Caco-2 (cell line): ENCODE measurements at regions of chr22 and their contacts with region 1.

Region 1: DNA sequence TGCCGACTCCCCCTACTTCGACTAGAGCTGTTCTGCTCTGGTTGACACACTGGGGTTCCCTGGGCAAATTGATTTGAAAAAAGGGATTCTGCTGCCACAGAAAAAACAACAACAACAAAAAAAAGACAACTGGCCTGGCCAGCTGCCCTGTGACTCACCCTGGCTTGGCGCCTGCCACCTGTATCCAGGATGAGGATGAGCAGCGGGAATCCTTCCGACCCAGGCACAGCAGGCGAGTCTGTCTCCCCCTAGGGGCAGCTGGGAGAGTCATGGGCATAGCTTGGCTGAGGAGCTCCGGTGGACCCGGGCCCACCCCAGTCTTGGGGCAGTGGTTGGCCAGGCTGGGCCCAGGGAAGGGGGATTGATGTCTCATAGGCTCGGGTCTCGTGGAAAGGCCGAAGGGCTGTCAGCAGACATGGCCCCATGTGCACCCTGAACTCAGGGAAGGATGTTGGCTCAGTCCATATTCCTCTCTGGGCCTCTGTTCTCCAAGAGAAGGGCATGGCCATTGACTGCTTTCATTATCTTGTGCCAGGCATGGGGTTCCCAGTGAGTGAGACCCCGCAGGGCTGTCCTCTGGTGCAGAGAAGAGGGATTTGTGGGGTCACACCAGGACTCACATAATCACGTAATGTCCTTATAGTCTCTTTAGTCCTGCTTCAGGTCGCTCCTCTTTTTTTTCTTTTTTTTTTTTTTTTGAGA is 10.4 kb upstream of the SUN2 start:
- DNase-seq: peak; percentile 70 to 76
- H3K4me3 ChIP-seq: no peak overlapping the region
- H3K4me3 Mint-ChIP-seq: no peak overlapping the region
- H3K27ac Mint-ChIP-seq: no peak overlapping the region
- H3K4me1 ChIP-seq: no peaks in the 10 kb centered on the region
- H3K4me1 Mint-ChIP-seq: no peaks in the 10 kb centered on the region
- H3K27me3 ChIP-seq: no peaks in the 10 kb centered on the region
- H3K27me3 Mint-ChIP-seq: no peaks in the 10 kb centered on the region
- CTCF ChIP-seq: peak; percentile 78 to 86

Region 2: GRCh38 chr22:38481162-38481870 is 284.9 kb before region 1 on chr22:
- CTCF ChIA-PET with region 1: no interaction called
- POLR2A ChIA-PET with region 1: no interaction called
- intact Hi-C with region 1: no loop called
- DNase-seq: no peak
- H3K4me3 ChIP-seq: no peak overlapping the region
- H3K4me3 Mint-ChIP-seq: no peak overlapping the region
- H3K27ac Mint-ChIP-seq: peak overlapping the region; percentile 15
- H3K4me1 ChIP-seq: peaks cover 11% of the 10 kb centered on the region
- H3K4me1 Mint-ChIP-seq: peaks cover 8% of the 10 kb centered on the region
- H3K27me3 ChIP-seq: no peaks in the 10 kb centered on the region
- H3K27me3 Mint-ChIP-seq: no peaks in the 10 kb centered on the region
- CTCF ChIP-seq: no peak

Region 3: GRCh38 chr22:38724926-38725571 is 41.2 kb before region 1 on chr22:
- CTCF ChIA-PET with region 1: interaction called, 10 read pairs
- POLR2A ChIA-PET with region 1: no interaction called
- intact Hi-C with region 1: no loop called
- DNase-seq: peak in 1 of 2 experiments; percentile 36
- H3K4me3 ChIP-seq: no peak overlapping the region
- H3K4me3 Mint-ChIP-seq: no peak overlapping the region
- H3K27ac Mint-ChIP-seq: no peak overlapping the region
- H3K4me1 ChIP-seq: no peaks in the 10 kb centered on the region
- H3K4me1 Mint-ChIP-seq: no peaks in the 10 kb centered on the region
- H3K27me3 ChIP-seq: no peaks in the 10 kb centered on the region
- H3K27me3 Mint-ChIP-seq: no peaks in the 10 kb centered on the region
- CTCF ChIP-seq: peak; percentile 44 to 49

Region 4: DNA sequence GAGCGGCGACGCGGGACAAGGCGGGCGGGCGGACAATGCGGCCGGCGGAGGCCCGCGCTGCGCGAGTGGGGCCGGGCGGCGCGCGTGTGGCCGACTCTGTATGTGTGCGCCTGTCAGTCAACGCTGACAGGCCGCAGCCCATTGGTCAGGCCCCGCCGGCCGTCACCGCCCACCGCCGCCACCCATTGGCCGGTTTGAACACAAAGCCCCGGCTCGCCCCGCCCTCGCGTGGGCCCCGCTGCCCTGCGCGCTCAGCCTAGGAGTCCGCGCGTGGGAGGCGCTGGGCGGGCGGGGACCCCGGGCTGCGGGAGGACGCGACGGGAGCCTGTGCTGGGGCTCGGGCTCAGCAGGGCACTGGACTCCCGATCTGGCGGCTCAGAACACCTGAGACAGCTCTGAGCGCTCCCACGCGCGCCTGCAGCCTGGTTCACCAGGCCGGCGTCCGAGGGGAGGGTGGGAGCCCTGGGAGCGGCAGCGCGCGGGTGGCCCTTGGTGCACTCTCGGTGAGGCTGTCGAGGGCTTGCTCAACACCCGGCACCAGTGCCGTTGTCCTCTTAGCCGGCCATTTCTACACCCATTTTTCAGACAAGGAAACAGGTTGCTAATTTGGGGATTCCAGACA is 10.2 kb before region 1 on chr22 and contains the start of gene SUN2:
- CTCF ChIA-PET with region 1: interaction called, 11 read pairs
- POLR2A ChIA-PET with region 1: no interaction called
- intact Hi-C with region 1: no loop called
- DNase-seq: peak; percentile 85 to 91
- H3K4me3 ChIP-seq: peak within 1 kb of the TSS; percentile 94
- H3K4me3 Mint-ChIP-seq: peak within 1 kb of the TSS; percentile 77
- H3K27ac Mint-ChIP-seq: peak within 1 kb of the TSS; percentile 80
- H3K4me1 ChIP-seq: peaks cover 21% of the 10 kb centered on the region
- H3K4me1 Mint-ChIP-seq: peaks cover 13% of the 10 kb centered on the region
- H3K27me3 ChIP-seq: no peaks in the 10 kb centered on the region
- H3K27me3 Mint-ChIP-seq: no peaks in the 10 kb centered on the region
- CTCF ChIP-seq: no peak
- total RNA-seq, gene SUN2: 61.9 and 67.8 TPM in 2 replicates

Region 5: GRCh38 chr22:38802671-38803121 is 36.5 kb after region 1 on chr22:
- CTCF ChIA-PET with region 1: no interaction called
- POLR2A ChIA-PET with region 1: no interaction called
- intact Hi-C with region 1: no loop called
- DNase-seq: peak in 1 of 2 experiments; percentile 8
- H3K4me3 ChIP-seq: no peak overlapping the region
- H3K4me3 Mint-ChIP-seq: peak overlapping the region; percentile 0
- H3K27ac Mint-ChIP-seq: no peak overlapping the region
- H3K4me1 ChIP-seq: no peaks in the 10 kb centered on the region
- H3K4me1 Mint-ChIP-seq: no peaks in the 10 kb centered on the region
- H3K27me3 ChIP-seq: no peaks in the 10 kb centered on the region
- H3K27me3 Mint-ChIP-seq: peaks cover 16% of the 10 kb centered on the region
- CTCF ChIP-seq: no peak

Region 6: DNA sequence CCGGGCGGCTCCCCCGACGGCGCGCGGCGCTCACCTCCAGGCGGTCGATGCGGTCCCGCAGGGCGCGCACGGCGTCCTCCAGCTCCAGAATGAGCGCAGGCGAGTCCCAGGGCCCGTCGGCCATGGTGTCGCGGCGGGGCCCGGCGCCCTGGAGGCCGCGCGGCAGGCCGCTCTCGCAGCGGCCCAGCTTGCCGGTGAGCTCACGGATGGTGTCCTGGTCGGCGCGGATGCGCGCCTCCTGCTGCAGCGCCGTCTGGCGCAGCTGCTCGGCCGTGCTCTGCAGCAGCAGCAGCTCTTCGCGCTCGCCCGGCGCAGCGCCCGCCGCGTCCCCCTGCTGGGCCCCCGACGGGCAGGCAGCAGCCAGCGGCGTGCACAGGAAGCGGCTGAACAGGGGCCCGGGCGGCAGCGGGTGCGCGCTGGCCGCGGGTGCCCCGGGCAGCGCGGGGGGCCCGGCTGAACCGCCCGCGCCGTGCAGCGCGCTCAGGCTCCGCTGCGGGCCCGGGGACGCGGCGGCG is 77.0 kb after region 1 on chr22:
- CTCF ChIA-PET with region 1: interaction called, 29 read pairs
- POLR2A ChIA-PET with region 1: no interaction called
- intact Hi-C with region 1: loop called (anchors 5 kb)
- DNase-seq: peak; percentile 58 to 79
- H3K4me3 ChIP-seq: peak overlapping the region; percentile 57
- H3K4me3 Mint-ChIP-seq: peak overlapping the region; percentile 84
- H3K27ac Mint-ChIP-seq: no peak overlapping the region
- H3K4me1 ChIP-seq: peaks cover 13% of the 10 kb centered on the region
- H3K4me1 Mint-ChIP-seq: no peaks in the 10 kb centered on the region
- H3K27me3 ChIP-seq: no peaks in the 10 kb centered on the region
- H3K27me3 Mint-ChIP-seq: peaks cover 4% of the 10 kb centered on the region
- CTCF ChIP-seq: peak; percentile 12 to 27